Activated naive CD4-positive, alpha-beta T cell treated with anti-CD3 and anti-CD28 coated beads for 36 hours (primary cell): ENCODE measurements at regions of chr13 and their contacts with region 1.

Region 1: GRCh38 chr13:30422054-30422839 is at the start of gene UBE2L5:
- DNase-seq: peak; percentile 72
- H3K4me3 Mint-ChIP-seq: peak within 1 kb of the TSS; percentile 80
- H3K27ac Mint-ChIP-seq: peak within 1 kb of the TSS; percentile 57
- H3K4me1 Mint-ChIP-seq: peaks cover 10% of the 10 kb centered on the region
- H3K27me3 Mint-ChIP-seq: no peaks in the 10 kb centered on the region
- total RNA-seq, gene UBE2L5: not detected

Region 2: GRCh38 chr13:30395192-30396084 is 26.8 kb before region 1 on chr13:
- CTCF ChIA-PET with region 1: no interaction called
- intact Hi-C with region 1: loop called (anchors 1 kb)
- DNase-seq: peak; percentile 88
- H3K4me3 Mint-ChIP-seq: peak overlapping the region; percentile 85
- H3K27ac Mint-ChIP-seq: peak overlapping the region; percentile 94
- H3K4me1 Mint-ChIP-seq: peaks cover 23% of the 10 kb centered on the region
- H3K27me3 Mint-ChIP-seq: no peaks in the 10 kb centered on the region